ENCODE measurements at regions of chr9 and their contacts with region 1.

Region 1: DNA sequence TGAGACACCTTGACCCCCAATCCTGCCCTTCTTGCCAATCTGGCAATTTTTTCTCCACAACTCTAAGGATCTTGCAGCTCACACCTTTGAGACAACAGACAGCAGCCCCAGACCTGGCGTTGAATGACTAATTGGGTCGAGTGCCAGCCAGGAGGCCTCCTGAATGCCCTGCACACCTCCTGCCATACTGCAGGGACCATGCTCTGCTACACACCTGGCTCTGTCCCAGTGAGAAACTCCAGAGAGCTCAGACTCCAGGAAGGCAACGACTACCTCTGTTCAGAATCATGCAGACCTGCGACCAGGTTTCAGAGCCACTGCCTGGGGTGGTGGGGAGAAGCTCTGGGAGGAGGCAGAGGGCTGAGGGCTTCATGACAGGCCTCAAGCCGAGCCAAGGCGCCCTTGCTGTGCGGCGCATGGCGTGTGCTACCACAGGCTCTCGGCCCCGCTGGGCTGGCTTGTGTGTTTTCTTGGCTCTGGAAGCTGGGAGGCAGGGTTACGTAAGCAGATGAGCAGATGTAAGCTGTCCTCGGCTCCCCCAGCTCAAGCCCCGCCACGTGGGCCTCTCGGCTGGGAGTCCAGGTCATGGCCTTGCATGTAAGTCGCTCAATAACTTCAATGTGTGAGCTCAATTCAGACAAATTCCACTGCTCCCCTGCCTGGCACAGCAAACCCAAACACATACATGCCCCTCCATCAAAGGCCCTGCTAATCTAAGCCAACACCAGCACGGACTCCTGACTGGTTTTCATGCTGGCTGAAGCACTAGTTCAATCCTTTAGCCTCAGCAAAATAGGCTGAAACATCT is 27.5 kb downstream of the B4GALT1 start:
- DNase-seq: no peak
- ATAC-seq: no peak
- H3K4me3 ChIP-seq: no peak overlapping the region
- H3K27ac ChIP-seq: peak overlapping the region; percentile 85
- H3K4me1 ChIP-seq: peaks cover 94% of the 10 kb centered on the region
- H3K27me3 ChIP-seq: no peaks in the 10 kb centered on the region
- CTCF ChIP-seq: no peak
- EP300 ChIP-seq: no peak
- POLR2A ChIP-seq: peak; percentile 45; the same call in 1 of the 2 replicates
- RAD21 ChIP-seq: no peak

Region 2: DNA sequence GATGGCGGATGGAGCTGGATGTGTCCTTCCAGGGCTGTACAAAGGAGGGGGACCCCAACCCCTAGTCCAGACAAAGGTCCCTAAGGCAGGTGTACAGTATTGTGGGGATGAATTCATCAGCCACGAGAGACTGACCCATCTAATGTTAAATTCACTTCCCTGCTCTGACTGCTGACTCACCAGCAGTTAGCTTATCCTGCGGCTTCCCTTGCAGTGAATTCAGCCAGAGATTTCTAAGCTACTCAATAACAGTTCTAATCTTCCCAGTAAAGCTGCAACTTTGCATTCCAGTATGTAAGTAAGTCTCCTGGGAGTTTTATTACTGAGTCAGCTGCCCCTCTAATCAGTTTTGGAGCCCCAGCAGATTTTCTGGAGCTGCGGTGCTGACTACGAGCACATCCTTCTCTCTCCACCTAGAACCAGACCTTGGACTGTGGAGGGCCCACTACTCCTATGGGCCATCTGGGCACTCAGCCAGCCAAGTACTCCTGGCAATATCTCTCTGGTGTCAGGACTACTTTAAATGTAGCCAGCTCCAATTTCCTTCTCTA is 11.5 kb after region 1 on chr9:
- CTCF ChIA-PET with region 1: interaction called, 21 read pairs
- POLR2A ChIA-PET with region 1: interaction called, 17 read pairs
- RAD21 ChIA-PET with region 1: interaction called, 9 read pairs
- SMC1A ChIA-PET with region 1: interaction called, 172 read pairs
- in situ Hi-C with region 1: no loop called
- intact Hi-C with region 1: no loop called
- DNase-seq: no peak
- ATAC-seq: no peak
- H3K4me3 ChIP-seq: no peak overlapping the region
- H3K27ac ChIP-seq: 0 out of 2 replicates have a peak overlapping the region, but pooled peaks have one; percentile 20
- H3K4me1 ChIP-seq: peaks cover 54% of the 10 kb centered on the region
- H3K27me3 ChIP-seq: no peaks in the 10 kb centered on the region
- CTCF ChIP-seq: no peak
- EP300 ChIP-seq: no peak
- POLR2A ChIP-seq: no peak
- RAD21 ChIP-seq: no peak

Region 3: GRCh38 chr9:33159760-33160127 is 20.1 kb after region 1 on chr9:
- CTCF ChIA-PET with region 1: interaction called, 58 read pairs
- POLR2A ChIA-PET with region 1: interaction called, 73 read pairs
- RAD21 ChIA-PET with region 1: interaction called, 46 read pairs
- SMC1A ChIA-PET with region 1: interaction called, 172 read pairs
- in situ Hi-C with region 1: no loop called
- intact Hi-C with region 1: loop called (anchors 2 kb)
- DNase-seq: no peak
- ATAC-seq: peak; percentile 60
- H3K4me3 ChIP-seq: peak overlapping the region; percentile 90
- H3K27ac ChIP-seq: peak overlapping the region; percentile 92
- H3K4me1 ChIP-seq: peaks cover 74% of the 10 kb centered on the region
- H3K27me3 ChIP-seq: no peaks in the 10 kb centered on the region
- CTCF ChIP-seq: no peak
- EP300 ChIP-seq: peak in 1 of 2 experiments; percentile 81; a peak in 3 of 4 replicates
- POLR2A ChIP-seq: peak; percentile 53; the same call in 1 of the 2 replicates
- RAD21 ChIP-seq: 0 out of 2 replicates have a peak, but pooled peaks have one; percentile 18